A673 (cell line): ENCODE measurements at regions of chr9 and their contacts with region 1.

Region 1: DNA sequence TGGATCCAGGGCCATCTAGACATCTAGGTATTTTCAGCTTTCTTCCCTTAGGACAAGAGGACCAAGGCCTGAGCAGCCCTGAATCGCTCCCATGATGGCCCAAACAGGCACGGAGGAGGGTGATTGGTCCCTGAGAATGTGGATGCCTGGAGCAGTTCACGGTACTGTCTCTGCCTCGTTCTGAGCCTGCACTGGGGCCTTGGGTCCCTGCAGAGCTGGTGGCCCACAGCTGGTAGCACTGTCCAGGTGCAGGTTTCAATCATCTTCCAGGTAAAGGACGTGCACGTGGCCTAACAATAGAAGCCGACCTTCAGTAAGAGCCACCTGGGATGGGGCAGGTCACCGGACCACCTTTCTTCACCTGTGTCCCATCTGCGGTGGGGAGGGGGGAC is 19.4 kb upstream of the FCN1 start:
- DNase-seq: no peak
- H3K4me3 ChIP-seq: no peak overlapping the region
- H3K27ac ChIP-seq: no peak overlapping the region
- H3K4me1 ChIP-seq: peaks cover 12% of the 10 kb centered on the region
- H3K27me3 ChIP-seq: no peaks in the 10 kb centered on the region
- CTCF ChIP-seq: no peak

Region 2: DNA sequence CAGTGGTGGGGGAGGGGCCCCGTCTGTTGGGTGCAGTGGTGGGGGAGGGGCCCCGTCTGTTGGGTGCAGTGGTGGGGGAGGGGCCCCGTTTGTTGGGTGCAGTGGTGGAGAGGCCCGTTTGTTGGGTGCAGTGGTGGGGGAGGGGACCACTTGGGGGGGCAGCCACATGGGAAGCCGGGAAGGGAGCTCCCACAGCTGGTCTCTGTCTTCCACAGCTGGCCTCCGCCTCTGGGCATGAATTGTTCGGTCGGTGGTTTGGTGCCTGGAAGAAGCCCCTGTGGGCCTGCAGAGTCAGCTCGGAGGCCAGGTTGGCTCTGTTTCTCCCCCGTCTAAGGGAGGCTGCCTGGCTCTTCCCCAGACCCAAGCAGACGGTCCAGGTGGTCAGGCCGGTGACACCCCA is 226.3 kb before region 1 on chr9:
- CTCF ChIA-PET with region 1: no interaction called
- POLR2A ChIA-PET with region 1: interaction called, 14 read pairs
- intact Hi-C with region 1: no loop called
- DNase-seq: no peak
- H3K4me3 ChIP-seq: no peak overlapping the region
- H3K27ac ChIP-seq: no peak overlapping the region
- H3K4me1 ChIP-seq: peaks cover 12% of the 10 kb centered on the region
- H3K27me3 ChIP-seq: no peaks in the 10 kb centered on the region
- CTCF ChIP-seq: no peak

Region 3: DNA sequence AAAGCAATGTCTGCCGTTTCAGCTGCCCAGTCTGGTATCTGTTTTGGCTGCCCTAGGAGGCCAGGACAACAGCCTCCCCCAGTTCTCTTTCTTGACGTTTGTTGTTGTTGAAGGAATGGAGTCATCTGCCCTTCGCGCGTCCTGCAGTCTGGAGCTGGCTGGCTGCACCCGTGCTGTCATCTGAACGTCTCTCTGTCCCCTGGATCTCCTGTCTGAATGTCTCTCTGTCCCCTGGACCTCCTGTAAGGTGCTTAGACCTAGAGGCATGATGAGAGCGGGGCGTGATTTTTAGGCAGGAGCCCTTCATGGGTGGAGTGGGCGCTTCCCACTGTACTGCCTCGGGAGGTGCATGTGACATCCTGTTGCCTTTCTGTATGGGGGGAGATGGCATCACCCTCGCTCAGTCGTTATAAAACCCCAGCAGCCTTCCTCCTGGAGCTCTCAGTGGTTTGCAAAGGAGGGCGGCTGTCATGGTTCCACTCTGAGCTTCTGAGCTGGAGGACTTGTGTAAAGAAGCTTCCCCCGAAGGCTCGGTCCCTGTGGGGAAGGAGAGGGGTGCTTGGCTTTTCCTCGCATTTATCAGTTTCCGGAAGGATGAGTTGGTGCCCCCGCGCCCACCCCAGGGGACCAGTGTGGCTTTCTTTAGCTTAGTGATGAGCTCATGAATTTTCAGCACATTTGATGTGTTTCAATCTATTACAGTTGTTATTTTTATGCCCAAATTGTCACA is 100.5 kb after region 1 on chr9:
- CTCF ChIA-PET with region 1: no interaction called
- POLR2A ChIA-PET with region 1: no interaction called
- intact Hi-C with region 1: no loop called
- DNase-seq: peak; percentile 65
- H3K4me3 ChIP-seq: no peak overlapping the region
- H3K27ac ChIP-seq: peak overlapping the region; percentile 27
- H3K4me1 ChIP-seq: peaks cover 19% of the 10 kb centered on the region
- H3K27me3 ChIP-seq: no peaks in the 10 kb centered on the region
- CTCF ChIP-seq: no peak

Region 4: GRCh38 chr9:135476981-135477380 is 539.8 kb after region 1 on chr9:
- CTCF ChIA-PET with region 1: no interaction called
- POLR2A ChIA-PET with region 1: interaction called, 13 read pairs
- intact Hi-C with region 1: no loop called
- DNase-seq: no peak
- H3K4me3 ChIP-seq: no peak overlapping the region
- H3K27ac ChIP-seq: no peak overlapping the region
- H3K4me1 ChIP-seq: peaks cover 4% of the 10 kb centered on the region
- H3K27me3 ChIP-seq: no peaks in the 10 kb centered on the region
- CTCF ChIP-seq: no peak